Naive thymus-derived CD8-positive, alpha-beta T cell (primary cell): ENCODE measurements at regions of chr2 and their contacts with region 1.

Region 1: DNA sequence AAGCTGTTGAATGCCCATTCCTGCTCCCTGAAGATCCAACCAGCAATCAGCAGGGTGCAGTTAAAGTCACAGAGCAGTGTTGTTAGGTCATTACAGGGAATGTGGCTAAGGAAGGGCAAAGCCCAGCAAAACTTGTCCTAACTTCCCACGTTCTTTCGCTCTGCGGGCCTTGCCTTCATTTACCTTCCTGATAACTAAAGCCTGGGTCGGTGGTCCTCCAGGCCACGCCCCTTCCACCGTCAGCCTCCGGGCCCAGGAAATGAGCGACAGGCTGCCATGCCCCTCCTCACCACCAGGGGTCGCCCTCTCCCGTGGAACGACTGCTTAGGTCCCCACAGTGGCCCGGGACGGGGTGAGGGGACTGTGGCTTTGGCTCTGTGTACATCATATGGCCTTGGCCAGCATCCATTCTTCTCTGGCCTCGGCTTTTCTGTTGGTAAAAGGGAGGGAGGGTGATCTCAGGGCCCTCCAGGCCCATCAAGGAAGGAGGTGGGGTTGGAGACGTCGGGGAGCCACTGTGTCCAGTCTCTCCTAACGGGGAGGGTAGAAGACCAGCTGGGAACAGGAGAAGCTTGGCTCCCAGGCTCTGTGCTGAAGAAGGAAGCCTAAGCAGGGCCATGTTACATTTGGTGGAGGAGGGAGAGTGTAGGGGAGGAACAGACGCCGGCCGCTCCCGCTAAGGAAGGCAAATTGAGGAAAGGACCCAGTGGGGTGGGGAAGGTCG is 2.2 kb downstream of the SH2D6 start:
- DNase-seq: peak; percentile 75 to 92 (median 85)
- ATAC-seq: peak; percentile 65 to 66
- H3K4me3 Mint-ChIP-seq: peak overlapping the region; percentile 46 to 84 (median 69)
- H3K27ac Mint-ChIP-seq: peak overlapping the region in 8 of 10 donors; percentile 68 to 95 (median 82)
- H3K4me1 Mint-ChIP-seq: peaks cover 8 to 28% (median 26%) of the 10 kb centered on the region in 4 donors
- H3K27me3 Mint-ChIP-seq: no peaks in the 10 kb centered on the region

Region 2: GRCh38 chr2:85354286-85355072 is 66.2 kb before region 1 on chr2 and contains the starts of genes ELMOD3 and RETSAT:
- POLR2A ChIA-PET with region 1: interaction called, 16 read pairs
- DNase-seq: peak; percentile 85 to 99 (median 98)
- ATAC-seq: peak; percentile 98 to 99
- H3K4me3 Mint-ChIP-seq: peak within 1 kb of the TSS; percentile 89 to 100 (median 98)
- H3K27ac Mint-ChIP-seq: peak within 1 kb of the TSS; percentile 95 to 100 (median 99)
- H3K4me1 Mint-ChIP-seq: peaks cover 22 to 68% (median 53%) of the 10 kb centered on the region in 4 donors
- H3K27me3 Mint-ChIP-seq: no peaks in the 10 kb centered on the region
- polyA plus RNA-seq, gene ELMOD3: 6.3 to 14.5 (median 11.8) TPM
- polyA plus RNA-seq, gene RETSAT: 6.6 to 15.1 (median 9.9) TPM

Region 3: DNA sequence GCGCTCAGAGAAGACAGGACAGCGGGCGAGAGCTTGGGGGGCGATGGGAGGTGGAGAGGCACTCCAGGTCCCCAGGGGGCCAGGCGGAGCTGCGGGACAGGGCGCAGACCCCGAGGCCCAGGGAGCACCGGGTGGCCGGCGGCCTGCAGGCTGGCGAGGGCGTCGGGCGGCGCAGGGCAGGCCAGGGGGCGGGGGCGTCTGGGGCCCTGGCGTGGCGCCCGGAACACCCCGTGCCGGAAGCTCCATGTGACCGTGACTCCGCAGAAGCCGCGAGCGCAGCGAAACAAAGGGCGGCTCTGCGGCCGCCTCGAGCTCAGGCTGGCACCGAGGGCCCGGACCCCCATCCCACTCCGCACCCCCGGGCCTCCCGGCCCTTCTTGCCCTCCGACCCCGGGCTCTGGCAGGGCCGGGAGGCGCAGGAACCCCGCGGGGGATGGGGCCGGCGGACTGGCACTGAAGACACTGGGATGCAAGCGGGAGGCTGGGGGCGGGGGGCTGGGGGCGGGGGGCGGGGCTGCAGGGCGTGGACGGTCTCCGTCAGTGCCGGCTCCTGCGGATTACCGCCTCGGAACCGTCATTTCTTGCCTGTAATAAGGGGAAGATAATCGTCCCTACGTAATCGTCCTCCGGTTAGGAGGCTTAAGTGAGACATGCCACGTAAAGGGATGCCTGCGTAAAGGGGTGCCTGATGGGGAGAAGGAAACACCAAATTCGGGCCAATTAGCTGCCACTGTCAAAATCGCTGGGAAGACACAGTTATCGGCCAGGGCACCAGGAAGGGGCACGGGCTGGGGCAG is 17.0 kb after region 1 on chr2:
- POLR2A ChIA-PET with region 1: interaction called, 19 read pairs
- DNase-seq: peak; percentile 57 to 83 (median 72)
- ATAC-seq: peak; percentile 88 to 92
- H3K4me3 Mint-ChIP-seq: peak overlapping the region; percentile 78 to 98 (median 89)
- H3K27ac Mint-ChIP-seq: peak overlapping the region; percentile 89 to 97 (median 95)
- H3K4me1 Mint-ChIP-seq: peaks cover 13 to 43% (median 41%) of the 10 kb centered on the region in 4 donors
- H3K27me3 Mint-ChIP-seq: no peaks in the 10 kb centered on the region

Region 4: DNA sequence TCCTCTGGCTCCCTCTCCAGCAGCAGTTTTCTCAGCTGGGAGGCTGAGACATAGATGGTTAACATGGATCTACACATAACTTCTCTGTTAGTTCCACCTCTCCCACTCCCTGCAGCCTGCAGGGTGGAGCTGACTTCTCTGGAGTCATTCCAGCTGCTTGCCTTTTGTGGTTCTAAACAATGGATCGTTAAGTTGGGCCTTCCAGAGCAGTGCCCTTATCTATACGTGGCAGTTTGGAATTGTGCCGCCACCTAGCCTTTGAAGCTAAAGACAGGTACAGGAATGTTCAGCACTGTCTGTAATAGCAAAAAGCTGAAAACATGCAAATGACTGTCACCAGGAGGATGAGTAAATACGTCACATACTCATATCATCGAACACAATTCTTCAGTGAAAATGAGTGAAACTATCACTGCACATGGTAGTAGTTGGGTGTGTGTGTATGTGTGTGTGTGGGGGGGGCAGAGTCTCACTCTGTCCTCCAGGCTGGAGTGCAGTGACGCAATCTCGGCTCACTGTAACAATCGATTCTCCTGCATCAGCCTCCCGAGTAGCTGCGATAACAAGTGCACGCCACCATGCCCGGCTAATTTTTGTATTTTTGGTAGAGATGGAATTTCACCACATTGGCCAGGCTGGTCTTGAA is 48.1 kb after region 1 on chr2:
- POLR2A ChIA-PET with region 1: no interaction called
- DNase-seq: no peak
- ATAC-seq: no peak
- H3K4me3 Mint-ChIP-seq: no peak overlapping the region
- H3K27ac Mint-ChIP-seq: no peak overlapping the region
- H3K4me1 Mint-ChIP-seq: peaks cover 0 to 8% (median 6%) of the 10 kb centered on the region in 4 donors
- H3K27me3 Mint-ChIP-seq: peaks cover 0 to 1% (median 0%) of the 10 kb centered on the region in 5 donors

Region 5: DNA sequence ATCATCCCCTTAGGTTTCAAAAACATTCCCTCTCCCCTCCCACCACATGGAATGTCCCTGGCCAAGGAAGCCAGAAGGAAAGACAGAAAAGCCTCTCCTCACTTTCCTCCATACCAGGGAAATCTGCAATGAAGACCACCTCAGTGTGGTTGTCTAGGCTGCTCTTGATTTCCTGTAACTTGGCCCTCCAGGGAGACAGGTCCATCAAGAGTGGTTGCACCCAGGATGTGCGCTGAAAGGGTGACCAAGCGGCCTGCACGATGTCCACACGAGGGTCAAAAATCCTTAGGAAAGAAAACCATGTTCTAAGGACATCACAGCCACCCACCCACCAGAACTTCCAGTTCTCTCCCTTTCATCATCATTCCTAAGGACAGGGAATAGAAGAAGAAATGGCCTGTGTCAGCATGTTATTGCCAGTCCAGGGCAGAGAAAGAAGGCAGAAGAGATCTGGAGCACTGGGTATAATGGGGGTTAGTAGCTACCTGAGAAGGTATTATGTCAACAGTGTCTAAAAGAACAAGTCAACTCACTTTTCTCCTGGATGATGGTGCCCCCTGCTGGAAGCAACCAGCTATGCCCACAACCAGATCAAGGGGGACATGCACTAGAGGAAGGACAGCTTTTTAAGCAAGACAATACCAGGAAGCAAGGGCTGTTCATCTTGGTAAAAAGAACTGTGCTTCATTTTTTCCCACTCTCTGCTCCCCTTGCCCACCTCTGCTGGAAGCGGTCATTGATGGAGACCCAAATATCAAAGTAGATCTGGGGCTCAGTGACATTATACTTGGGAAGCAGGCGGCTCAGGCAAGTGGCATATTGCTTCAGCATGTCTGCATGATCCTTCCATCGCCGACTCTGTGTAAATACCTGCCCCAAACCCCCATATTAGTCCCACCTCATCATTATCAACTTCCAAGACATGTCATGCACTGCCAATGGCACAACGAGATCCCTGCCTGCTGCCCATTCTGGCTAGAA is 131.3 kb after region 1 on chr2:
- POLR2A ChIA-PET with region 1: interaction called, 79 read pairs
- DNase-seq: peak; percentile 78 to 95 (median 90)
- ATAC-seq: peak; percentile 97 to 99
- H3K4me3 Mint-ChIP-seq: no peak overlapping the region
- H3K27ac Mint-ChIP-seq: peak overlapping the region in 8 of 10 donors; percentile 29 to 75 (median 50)
- H3K4me1 Mint-ChIP-seq: peaks cover 4 to 7% (median 6%) of the 10 kb centered on the region in 4 donors
- H3K27me3 Mint-ChIP-seq: no peaks in the 10 kb centered on the region